IMR-90 (cell line): ENCODE measurements at regions of chr2 and their contacts with region 1.

Region 1: DNA sequence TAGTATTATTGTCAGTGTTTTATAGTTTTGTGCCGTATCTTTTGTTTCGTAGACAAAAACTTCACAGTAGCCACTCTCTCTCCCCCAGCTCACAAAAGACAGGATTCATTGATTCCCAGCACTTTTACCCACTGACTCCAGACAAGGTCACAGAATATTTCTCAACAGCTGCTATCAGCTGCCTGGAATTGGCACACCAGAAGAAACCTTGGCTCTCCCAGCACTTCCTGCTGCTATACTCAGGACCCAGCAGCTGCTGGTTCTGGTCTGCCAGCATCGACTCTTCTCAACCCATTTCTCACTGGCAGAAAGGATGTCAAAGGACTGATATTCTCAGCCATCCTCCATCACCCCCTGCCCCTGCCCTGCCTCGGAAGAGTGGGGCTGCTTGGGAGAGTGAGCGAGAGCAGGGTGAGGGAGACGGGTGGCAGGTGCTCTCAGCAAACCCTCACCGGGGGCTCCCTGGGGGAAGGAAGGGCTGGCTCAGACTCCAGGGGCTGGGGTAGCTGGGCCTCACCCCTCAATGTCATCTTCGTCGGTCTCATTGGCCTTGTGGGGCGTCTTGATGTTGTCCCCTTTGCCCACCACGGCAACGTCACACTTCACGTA is 6.1 kb upstream of the OTOF start:
- DNase-seq: no peak
- ATAC-seq: peak; percentile 32; the same call in 1 of the 2 replicates
- H3K4me3 ChIP-seq: no peak overlapping the region
- H3K27ac ChIP-seq: no peak overlapping the region
- H3K4me1 ChIP-seq: no peaks in the 10 kb centered on the region
- H3K27me3 ChIP-seq: peaks cover 30% of the 10 kb centered on the region
- CTCF ChIP-seq: no peak
- POLR2A ChIP-seq: no peak
- RAD21 ChIP-seq: no peak

Region 2: DNA sequence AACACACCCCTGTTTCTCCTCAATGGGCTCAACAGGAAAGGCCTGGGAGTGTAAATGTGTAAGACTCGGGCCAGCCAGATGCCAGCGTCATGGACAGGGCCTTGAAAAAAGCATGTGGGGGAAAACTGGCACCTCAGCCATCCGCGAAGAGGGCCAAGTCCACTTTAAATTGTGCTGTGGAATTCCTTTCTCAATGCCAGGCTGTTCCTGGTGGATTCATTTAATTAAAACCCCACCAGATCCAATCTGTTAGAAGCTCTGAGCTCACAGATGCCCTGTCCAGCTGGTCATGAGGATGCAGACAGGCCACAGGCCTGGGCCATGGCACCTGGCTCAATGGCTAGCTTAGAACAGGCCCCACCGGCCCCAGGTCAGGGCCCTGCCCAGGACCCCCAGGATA is 233.3 kb after region 1 on chr2:
- CTCF ChIA-PET with region 1: no interaction called
- POLR2A ChIA-PET with region 1: no interaction called
- dilution Hi-C with region 1: no loop called
- in situ Hi-C with region 1: no loop called
- intact Hi-C with region 1: loop called (anchors 5 kb)
- DNase-seq: no peak
- ATAC-seq: no peak
- H3K4me3 ChIP-seq: no peak overlapping the region
- H3K27ac ChIP-seq: no peak overlapping the region
- H3K4me1 ChIP-seq: peaks cover 5% of the 10 kb centered on the region
- H3K27me3 ChIP-seq: peaks cover 8% of the 10 kb centered on the region
- CTCF ChIP-seq: no peak
- POLR2A ChIP-seq: no peak
- RAD21 ChIP-seq: no peak